ENCODE measurements at regions of chr12 and their contacts with region 1.

Region 1: DNA sequence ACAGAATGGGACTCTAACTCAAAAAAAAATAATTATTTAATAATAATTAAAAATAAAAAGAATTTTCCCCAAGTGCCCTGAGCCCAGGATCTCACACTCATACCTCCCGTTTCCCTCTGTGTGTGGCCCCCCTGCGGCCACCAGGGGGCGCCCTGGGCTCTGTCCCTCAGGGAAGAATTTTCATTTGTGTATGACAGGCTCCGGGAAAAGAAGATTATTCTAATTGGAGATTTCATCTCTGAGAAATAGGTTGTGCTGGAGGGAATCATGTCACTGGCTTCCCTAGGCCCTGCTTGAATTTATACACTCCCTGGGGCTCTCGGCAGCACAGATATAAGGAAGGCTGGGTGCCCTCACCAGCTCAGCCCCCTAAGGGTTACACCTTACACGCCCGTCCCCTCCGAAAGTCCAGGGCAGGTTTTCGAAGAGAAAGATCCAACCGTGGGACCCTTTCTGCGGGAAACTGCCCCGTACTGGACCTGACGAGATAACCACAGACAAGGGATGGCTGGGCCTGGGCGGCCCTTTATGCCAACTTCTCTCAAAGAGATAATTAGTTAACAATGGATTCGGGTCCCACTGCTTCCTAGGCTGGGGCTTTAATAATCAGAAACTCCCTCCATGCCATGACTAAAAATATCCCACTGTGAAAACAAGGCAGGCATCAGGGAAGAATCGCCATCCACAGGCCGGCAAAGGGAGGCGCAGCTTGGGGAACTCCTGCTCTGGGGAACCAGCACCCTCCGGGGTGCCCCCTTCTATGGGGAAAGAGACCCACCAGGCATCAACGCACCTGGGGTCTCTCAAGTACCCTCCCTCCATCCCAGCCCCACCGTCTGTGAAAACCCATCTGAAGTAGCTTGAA is 80.7 kb downstream of the KDM2B start:
- DNase-seq: peak; percentile 86
- ATAC-seq: peak; percentile 87

Region 2: GRCh38 chr12:121536899-121537813 is 37.0 kb after region 1 on chr12:
- intact Hi-C with region 1: loop called (anchors 2 kb)
- DNase-seq: peak; percentile 97
- ATAC-seq: peak; percentile 87

Region 3: DNA sequence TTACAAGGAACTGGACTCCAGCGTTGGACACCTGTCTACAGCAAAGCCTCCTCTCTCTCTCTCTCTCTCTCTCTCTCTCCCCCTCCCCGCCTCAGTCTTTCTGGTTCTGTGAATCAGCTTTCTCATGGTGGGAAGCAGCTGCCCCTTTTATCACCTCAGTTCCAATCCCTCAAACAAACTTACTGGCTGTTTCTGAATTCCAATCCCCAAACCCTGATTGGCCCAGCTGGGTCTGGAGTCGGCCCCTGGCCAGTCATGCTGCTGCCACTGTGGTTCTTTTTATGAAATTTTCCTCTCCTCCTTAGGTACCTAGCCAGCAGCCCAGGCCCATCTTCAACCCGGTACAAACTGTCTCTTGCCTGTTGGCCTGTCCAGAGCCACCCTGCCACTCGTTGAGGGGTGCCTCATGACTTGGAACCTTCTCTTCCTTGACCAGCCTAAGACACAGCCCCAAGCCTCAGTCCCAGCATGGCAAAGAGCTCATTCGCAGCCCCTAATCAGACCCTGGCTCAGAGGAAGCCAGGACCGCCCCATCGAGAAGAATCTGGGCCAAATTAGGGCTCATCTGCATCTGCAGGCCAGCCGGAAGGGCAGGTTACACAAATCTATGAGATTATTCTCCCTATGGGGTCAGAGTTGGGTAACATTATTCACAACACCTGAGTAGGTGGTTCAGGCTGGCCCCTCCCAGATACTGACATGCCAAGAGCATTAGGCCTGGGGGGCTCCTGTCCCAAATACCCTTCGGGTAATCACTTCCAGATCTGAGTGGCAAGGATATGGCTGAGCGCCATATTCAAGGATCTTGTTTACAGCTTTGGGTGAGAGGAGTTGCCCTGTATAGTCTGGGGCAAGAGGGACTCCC is 178.8 kb after region 1 on chr12:
- intact Hi-C with region 1: loop called (anchors 1 kb)
- DNase-seq: no peak
- ATAC-seq: no peak

Region 4: DNA sequence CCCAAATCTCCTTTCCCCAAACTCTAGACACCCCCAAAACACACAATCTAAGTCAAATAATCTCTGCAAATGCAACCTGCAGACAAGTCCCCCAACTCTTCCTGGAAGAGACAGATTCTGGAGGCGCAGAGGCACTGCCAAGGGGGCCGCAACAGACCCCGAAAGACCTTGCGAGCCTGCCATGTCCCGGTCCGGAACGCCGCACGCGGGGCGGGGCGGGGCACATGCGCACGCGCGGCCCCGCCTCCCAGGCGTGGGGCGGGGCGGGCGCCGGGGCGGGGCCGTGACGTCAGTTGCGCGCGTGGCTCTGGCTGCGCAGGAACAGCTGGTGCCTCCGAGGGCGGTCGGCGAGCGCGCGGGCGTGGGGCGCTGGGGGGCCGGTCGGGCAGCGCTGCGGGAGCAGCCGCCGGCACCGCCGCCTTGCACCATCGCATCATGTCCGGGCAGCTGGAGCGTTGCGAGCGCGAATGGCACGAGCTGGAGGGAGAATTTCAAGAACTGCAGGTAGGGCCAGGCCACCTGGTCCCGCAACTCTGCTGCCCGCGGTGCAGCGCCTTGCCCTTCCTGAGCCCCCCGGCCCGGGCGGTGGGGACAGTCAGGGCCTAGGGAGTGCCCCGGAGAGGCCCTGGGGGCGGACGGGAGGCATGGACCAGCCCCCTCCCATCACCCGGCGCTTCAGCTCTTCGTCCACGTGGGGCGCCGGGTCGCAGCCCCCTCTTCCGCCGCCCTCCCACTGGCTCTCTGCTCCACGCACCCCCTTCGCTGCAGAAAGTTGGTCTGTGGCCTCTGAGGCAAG is 212.5 kb after region 1 on chr12 and contains the start of gene TMEM120B:
- intact Hi-C with region 1: no loop called
- DNase-seq: peak; percentile 93
- ATAC-seq: peak; percentile 95
- total RNA-seq, gene TMEM120B: 10.3 TPM

Measured in Right ventricle myocardium inferior (tissue), 1 donor.